Activated naive CD4-positive, alpha-beta T cell treated with anti-CD3 and anti-CD28 coated beads for 36 hours (primary cell): ENCODE measurements at regions of chr2 and their contacts with region 1.

Region 1: DNA sequence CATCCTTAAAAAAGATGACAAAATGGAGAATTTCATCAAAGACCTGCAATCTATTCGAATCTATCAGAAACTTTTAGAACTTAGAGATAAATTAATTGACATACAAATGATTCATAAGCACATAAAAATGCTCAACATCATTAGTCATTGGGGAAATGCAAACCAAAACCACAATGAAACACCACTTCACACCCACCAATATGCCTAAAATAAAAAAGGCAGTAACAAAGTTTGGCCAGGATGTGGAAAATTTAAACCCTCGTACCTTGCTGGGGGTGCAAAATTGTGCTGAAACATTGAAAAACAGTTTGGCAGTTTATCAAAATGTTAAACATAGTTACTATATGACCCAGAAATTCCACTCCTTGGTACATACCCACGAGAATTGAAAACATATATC is 11.5 kb upstream of the EIF2AK3 start:
- DNase-seq: peak; percentile 37
- H3K4me3 Mint-ChIP-seq: no peak overlapping the region
- H3K27ac Mint-ChIP-seq: peak overlapping the region; percentile 24
- H3K4me1 Mint-ChIP-seq: peaks cover 17% of the 10 kb centered on the region
- H3K27me3 Mint-ChIP-seq: peaks cover 3% of the 10 kb centered on the region

Region 2: DNA sequence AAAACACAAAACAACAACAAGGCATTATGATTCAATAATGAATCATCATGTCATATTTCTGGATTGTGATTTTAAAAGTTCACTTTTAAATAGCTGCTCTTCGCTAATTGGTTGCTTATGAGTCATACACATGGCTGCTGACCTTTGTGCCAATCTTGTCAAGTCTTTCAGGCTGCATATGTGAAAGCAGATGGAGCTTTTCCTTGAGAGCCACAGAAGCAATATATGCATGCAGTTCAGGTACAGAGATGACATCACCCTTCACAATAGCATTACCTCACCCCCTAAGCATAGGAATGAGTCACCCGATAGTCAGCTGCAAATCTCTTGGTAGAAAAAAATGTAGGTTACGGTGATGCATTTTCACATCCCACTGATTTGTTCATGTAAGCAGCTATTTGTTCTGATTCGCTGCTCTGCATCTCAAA is 38.7 kb before region 1 on chr2:
- CTCF ChIA-PET with region 1: no interaction called
- intact Hi-C with region 1: loop called (anchors 1 kb)
- DNase-seq: peak; percentile 67
- H3K4me3 Mint-ChIP-seq: no peak overlapping the region
- H3K27ac Mint-ChIP-seq: peak overlapping the region; percentile 16
- H3K4me1 Mint-ChIP-seq: peaks cover 35% of the 10 kb centered on the region
- H3K27me3 Mint-ChIP-seq: no peaks in the 10 kb centered on the region